Dorsolateral prefrontal cortex (tissue), 120 donors: ENCODE measurements at regions of chr3 and their contacts with region 1.

Region 1: GRCh38 chr3:132730891-132731580 is 8.8 kb upstream of the NPHP3 start:
- DNase-seq: no peak
- H3K4me3 ChIP-seq: no peak overlapping the region
- H3K27ac ChIP-seq: no peak overlapping the region
- H3K27me3 ChIP-seq: no peaks in the 10 kb centered on the region
- CTCF ChIP-seq: peak; percentile 5 to 79 (median 59)

Region 2: DNA sequence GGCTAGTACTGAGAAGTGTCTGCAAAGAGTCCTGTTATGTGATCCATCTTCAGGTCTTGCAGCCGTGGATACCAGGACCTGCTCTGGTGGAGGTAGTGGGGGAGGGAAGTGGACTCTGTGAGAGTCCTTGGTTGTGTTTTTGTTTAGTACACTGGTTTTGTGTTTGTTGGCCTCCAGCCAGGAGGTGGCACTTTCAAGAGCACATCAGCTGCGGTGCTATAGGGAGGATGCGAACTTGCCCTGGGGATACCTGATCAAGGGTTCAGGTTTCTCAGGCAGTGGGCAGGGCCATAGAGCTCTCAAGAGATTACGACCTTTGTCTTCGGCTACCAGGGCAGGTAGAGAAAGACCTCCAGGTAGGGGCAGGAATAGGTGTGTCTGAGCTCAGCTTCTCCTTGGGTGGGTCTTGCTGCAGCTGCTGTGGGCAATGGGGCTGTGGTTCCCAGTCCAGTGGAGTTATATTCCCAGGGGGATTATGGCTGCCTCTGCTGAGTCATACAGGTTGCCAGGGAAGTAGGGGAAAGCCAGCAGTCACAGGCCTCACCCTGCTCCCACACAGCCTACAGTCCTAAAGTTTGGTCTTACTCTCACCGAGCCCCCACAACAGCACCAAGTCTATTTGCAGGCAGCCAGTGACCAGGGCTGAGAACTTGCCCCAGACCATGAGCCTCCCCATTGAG is 124.0 kb after region 1 on chr3:
- intact Hi-C with region 1: no loop called
- DNase-seq: no peak
- H3K4me3 ChIP-seq: no peak overlapping the region
- H3K27ac ChIP-seq: no peak overlapping the region
- H3K27me3 ChIP-seq: no peaks in the 10 kb centered on the region
- CTCF ChIP-seq: no peak

Region 3: GRCh38 chr3:133426721-133427120 is 695.7 kb after region 1 on chr3:
- intact Hi-C with region 1: loop called (anchors 2 to 5 kb)
- DNase-seq: no peak
- H3K4me3 ChIP-seq: no peak overlapping the region
- H3K27ac ChIP-seq: peak overlapping the region in 1 of 59 donors; percentile 2
- H3K27me3 ChIP-seq: no peaks in the 10 kb centered on the region
- CTCF ChIP-seq: no peak